PC-9 (cell line): ENCODE measurements at regions of chr11 and their contacts with region 1.

Region 1: DNA sequence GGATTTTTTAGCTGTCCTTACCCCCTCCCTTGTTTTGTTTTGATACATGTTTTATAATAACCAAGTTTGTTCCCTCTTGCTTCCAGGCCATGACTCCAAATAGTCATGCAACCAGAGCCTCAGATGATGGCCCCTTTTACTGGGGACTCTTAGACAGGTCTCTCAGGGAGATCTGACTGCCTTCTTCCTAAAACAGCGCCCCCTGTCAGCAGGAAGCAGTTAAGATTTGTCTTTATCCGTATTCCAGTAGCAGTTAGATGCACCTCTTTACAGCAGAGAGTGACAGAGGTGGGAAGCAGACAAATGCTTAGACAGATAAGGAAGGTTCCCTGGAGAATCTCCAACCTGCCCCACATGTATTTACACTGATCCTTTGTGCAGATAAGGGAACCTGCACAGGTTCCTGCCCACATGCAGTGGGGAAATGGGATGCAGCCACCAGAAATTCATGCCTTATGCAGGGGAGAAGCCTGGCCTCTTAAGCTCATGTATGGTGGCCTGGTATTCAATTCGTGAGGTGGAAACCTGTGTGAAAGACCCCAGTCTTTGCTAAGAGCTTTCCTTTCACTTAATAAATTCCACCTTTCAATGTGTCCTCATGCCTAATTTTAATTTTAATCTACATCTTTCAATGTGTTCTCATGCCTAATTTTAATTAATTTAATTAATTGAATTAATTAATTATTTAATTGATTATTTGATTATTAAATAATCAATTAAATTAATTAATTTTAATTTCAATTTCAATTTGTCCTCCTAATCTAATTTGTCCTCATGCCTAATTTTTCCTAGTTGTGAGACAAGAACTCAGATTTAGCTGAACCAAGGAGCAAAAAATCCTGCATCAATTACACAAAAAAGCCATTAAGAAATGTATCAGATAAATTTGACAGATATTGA is 11.5 kb upstream of the GLYAT start:
- DNase-seq: no peak
- H3K4me3 ChIP-seq: no peak overlapping the region
- H3K27ac ChIP-seq: no peak overlapping the region
- H3K4me1 ChIP-seq: no peaks in the 10 kb centered on the region
- H3K27me3 ChIP-seq: no peaks in the 10 kb centered on the region
- CTCF ChIP-seq: peak; percentile 45; the same call in 1 of the 2 replicates

Region 2: GRCh38 chr11:58024601-58025091 is 718.6 kb before region 1 on chr11:
- CTCF ChIA-PET with region 1: interaction called, 10 read pairs
- POLR2A ChIA-PET with region 1: no interaction called
- intact Hi-C with region 1: no loop called
- DNase-seq: no peak
- H3K4me3 ChIP-seq: no peak overlapping the region
- H3K27ac ChIP-seq: no peak overlapping the region
- H3K4me1 ChIP-seq: no peaks in the 10 kb centered on the region
- H3K27me3 ChIP-seq: peaks cover 6% of the 10 kb centered on the region; the same call in 1 of the 2 replicates
- CTCF ChIP-seq: no peak